ENCODE measurements at regions of chr18 and their contacts with region 1.

Region 1: GRCh38 chr18:49858309-49859020 is 45.1 kb upstream of the ACAA2 start:
- DNase-seq: no peak
- H3K4me3 ChIP-seq: no peak overlapping the region
- H3K27me3 ChIP-seq: peaks cover 6% of the 10 kb centered on the region
- CTCF ChIP-seq: peak; percentile 92

Region 2: DNA sequence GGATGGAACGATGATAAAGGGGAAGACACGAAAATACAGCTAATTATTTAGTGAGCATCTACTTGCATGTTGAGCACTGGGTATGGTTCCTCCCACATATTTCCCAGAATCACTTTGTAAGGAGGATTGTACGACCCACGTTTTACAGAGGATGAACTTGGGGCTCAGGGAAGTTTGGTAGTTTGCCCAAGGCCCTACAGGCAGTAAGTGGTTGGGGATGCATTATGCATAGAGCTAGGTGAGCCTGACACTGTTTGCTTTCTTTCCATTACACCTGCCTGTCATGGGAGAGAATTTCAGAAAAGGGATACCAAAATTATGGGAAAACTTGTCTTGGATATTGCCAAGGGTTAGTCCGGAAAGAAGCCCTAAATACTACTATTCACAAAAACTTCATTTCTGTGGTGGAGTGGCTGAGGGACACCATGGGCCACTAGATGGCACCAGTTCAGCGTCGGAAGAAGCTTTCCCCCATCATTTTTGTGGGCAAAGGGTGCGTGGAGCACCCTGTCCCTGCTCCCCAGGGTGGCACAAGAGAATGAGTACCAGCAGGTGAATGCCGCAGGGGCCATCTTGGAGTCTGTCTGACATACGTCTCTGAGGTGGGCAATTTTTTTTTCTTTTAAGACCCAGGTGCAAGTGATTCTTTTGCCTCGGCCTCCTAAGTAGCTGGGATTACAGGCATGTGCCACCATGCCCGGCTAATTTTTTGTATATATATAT is 347.9 kb before region 1 on chr18:
- CTCF ChIA-PET with region 1: interaction called, 258 read pairs
- POLR2A ChIA-PET with region 1: no interaction called
- DNase-seq: no peak
- H3K4me3 ChIP-seq: no peak overlapping the region
- H3K27me3 ChIP-seq: peaks cover 5% of the 10 kb centered on the region; the same call in 1 of the 2 replicates
- CTCF ChIP-seq: peak; percentile 90

Region 3: DNA sequence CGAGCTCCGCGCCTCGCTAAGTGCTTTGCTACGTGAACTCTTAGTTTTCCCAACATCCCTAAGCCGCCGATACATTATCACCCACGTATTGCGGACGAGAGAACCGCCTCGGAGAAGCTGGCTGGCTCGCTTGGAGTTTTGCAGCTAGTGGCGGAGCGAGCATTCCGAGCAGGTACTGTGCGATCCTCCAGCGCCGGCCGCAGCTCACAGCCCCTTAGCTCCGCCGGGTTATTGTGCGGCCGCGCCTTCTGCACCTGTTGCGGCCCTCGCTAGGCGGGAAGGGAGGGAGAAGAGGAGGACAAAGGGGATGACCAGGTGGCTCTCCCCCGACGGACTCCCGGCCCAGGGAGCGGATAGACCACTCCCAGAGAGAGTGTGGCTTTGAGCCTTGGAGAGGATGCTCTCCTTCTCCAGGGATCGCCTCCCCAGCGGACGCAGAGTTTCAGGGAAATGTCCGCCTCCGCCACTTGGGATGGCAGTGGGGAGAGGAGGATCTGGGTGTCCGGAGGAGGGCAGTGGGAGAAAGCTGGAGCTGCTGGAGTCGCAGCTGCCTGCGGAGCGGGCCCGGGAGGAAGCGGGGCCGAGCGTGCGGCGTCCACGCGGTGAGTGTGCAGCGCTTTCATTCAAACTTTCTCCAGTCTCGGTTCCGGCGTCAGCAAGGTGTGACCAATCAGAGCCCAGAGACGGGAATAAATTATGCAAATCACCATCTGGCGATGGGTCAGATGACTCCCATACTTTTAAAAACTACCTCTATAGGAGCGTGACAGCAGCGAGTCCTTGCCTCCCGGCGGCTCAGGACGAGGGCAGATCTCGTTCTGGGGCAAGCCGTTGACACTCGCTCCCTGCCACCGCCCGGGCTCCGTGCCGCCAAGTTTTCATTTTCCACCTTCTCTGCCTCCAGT is 296.9 kb before region 1 on chr18 and contains the start of gene LIPG:
- CTCF ChIA-PET with region 1: interaction called, 159 read pairs
- POLR2A ChIA-PET with region 1: no interaction called
- DNase-seq: no peak
- H3K4me3 ChIP-seq: peak within 1 kb of the TSS; percentile 20
- H3K27me3 ChIP-seq: peaks cover 25% of the 10 kb centered on the region
- CTCF ChIP-seq: no peak
- polyA plus RNA-seq, gene LIPG: 0.25 and 0.42 TPM in 2 replicates

Region 4: GRCh38 chr18:49699303-49699702 is 159.2 kb before region 1 on chr18:
- CTCF ChIA-PET with region 1: no interaction called
- POLR2A ChIA-PET with region 1: no interaction called
- DNase-seq: no peak
- H3K4me3 ChIP-seq: no peak overlapping the region
- H3K27me3 ChIP-seq: no peaks in the 10 kb centered on the region
- CTCF ChIP-seq: no peak

Region 5: GRCh38 chr18:49784427-49785185 is 73.9 kb before region 1 on chr18:
- CTCF ChIA-PET with region 1: interaction called, 16 read pairs
- POLR2A ChIA-PET with region 1: no interaction called
- DNase-seq: no peak
- H3K4me3 ChIP-seq: no peak overlapping the region
- H3K27me3 ChIP-seq: no peaks in the 10 kb centered on the region
- CTCF ChIP-seq: peak; percentile 26; the same call in 1 of the 2 replicates

Region 6: GRCh38 chr18:49878567-49879270 is 20.3 kb after region 1 on chr18:
- CTCF ChIA-PET with region 1: interaction called, 26 read pairs
- POLR2A ChIA-PET with region 1: no interaction called
- DNase-seq: no peak
- H3K4me3 ChIP-seq: no peak overlapping the region
- H3K27me3 ChIP-seq: peaks cover 4% of the 10 kb centered on the region
- CTCF ChIP-seq: no peak

Region 7: DNA sequence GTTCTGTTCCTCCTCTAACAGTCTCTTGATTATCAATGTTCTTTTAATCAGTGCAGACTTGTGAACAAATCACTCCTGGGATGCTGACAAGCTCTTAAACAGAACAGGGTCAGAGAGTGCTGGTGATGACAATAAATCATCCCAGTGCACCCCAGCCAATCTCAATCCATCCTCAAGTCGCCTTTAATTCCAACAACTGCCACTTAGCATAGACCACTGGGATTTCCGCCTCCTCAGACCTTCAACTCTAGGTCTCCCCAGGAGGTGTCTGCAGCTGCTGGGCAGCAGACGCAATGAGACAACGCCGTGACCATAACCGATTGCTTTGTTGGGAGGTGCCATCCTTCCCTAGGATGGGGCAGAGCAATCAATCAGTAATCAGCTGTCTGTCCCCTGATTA is 139.1 kb after region 1 on chr18:
- CTCF ChIA-PET with region 1: no interaction called
- POLR2A ChIA-PET with region 1: no interaction called
- DNase-seq: no peak
- H3K4me3 ChIP-seq: no peak overlapping the region
- H3K27me3 ChIP-seq: no peaks in the 10 kb centered on the region
- CTCF ChIP-seq: no peak

Measured in BJ (cell line).